Gastrocnemius medialis (tissue), 4 donors: ENCODE measurements at regions of chr5 and their contacts with region 1.

Region 1: GRCh38 chr5:67246108-67246507 is 49.5 kb upstream of the CD180 start:
- DNase-seq: no peak
- ATAC-seq: peak; percentile 72 to 77
- H3K4me3 ChIP-seq: no peak overlapping the region
- H3K27ac ChIP-seq: peak overlapping the region in 3 of 4 donors; percentile 4 to 14 (median 14)
- H3K4me1 ChIP-seq: peaks cover 8 to 12% of the 10 kb centered on the region in 2 donors
- H3K27me3 ChIP-seq: no peaks in the 10 kb centered on the region
- CTCF ChIP-seq: peak; percentile 74 to 83 (median 81)
- POLR2A ChIP-seq: no peak

Region 2: GRCh38 chr5:67287510-67288268 is 41.6 kb after region 1 on chr5:
- in situ Hi-C with region 1: no loop called
- intact Hi-C with region 1: no loop called
- DNase-seq: no peak
- ATAC-seq: no peak
- H3K4me3 ChIP-seq: no peak overlapping the region
- H3K27ac ChIP-seq: no peak overlapping the region
- H3K4me1 ChIP-seq: no peaks in the 10 kb centered on the region
- H3K27me3 ChIP-seq: no peaks in the 10 kb centered on the region
- CTCF ChIP-seq: no peak
- POLR2A ChIP-seq: no peak

Region 3: DNA sequence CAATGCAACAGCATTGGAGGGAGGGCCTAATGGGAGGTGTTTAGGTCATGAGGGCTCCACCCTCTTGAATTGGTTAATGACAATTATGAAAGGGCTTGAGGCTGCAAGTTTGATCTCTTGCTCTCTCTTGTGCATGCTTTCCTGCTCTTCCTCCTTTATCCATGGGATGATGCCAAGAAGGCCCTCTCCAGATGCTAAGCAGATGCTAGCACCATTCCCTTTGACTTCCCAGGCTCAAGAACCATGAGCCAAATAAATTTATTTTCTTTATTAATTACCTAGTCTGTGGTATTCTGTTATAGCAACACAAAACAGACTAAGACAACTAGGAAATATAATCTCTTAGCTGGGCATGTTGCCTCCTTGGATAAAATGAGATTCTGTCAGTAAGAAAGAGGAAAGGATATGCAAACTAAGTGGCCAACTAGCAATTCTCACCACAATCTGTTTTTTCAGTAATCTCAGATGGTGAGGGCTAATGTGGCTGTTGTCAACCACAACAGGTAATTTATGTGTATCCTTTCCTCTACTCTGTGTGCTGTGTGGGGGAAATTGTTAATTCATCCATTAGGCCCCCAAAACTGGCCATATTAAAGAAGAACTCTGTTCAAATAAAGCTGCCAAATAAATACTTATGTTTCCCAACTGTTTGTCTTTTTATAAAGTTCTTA is 219.6 kb after region 1 on chr5:
- in situ Hi-C with region 1: no loop called
- intact Hi-C with region 1: loop called (anchors 10 kb)
- DNase-seq: no peak
- ATAC-seq: no peak
- H3K4me3 ChIP-seq: no peak overlapping the region
- H3K27ac ChIP-seq: peak overlapping the region in 1 of 4 donors; percentile 59
- H3K4me1 ChIP-seq: peaks cover 8 to 17% of the 10 kb centered on the region in 2 donors
- H3K27me3 ChIP-seq: no peaks in the 10 kb centered on the region
- CTCF ChIP-seq: no peak
- POLR2A ChIP-seq: no peak

Region 4: DNA sequence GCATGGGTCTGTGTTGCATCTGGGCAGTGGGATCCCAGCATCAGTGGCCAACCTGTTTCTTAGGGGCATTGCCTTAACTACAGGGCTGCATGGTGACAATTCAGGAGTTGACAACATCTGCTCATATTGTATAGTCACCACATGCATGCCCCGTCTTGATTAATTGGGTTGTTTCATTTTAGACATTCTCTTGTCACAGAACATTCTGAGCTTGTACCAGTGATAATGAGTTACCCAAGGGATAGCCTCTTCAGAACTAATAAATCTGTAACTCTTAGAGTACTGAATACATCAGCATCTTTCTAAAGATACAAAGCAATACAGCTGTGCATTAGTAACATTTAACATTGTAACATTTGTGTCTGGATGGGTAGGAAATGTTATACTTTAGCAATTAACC is 377.0 kb after region 1 on chr5:
- in situ Hi-C with region 1: no loop called
- intact Hi-C with region 1: no loop called
- DNase-seq: no peak
- ATAC-seq: peak in 1 of 2 donors; percentile 67
- H3K4me3 ChIP-seq: no peak overlapping the region
- H3K27ac ChIP-seq: peak overlapping the region in 1 of 4 donors; percentile 54
- H3K4me1 ChIP-seq: peaks cover 30 to 34% of the 10 kb centered on the region in 2 donors
- H3K27me3 ChIP-seq: no peaks in the 10 kb centered on the region
- CTCF ChIP-seq: no peak
- POLR2A ChIP-seq: no peak

Region 5: DNA sequence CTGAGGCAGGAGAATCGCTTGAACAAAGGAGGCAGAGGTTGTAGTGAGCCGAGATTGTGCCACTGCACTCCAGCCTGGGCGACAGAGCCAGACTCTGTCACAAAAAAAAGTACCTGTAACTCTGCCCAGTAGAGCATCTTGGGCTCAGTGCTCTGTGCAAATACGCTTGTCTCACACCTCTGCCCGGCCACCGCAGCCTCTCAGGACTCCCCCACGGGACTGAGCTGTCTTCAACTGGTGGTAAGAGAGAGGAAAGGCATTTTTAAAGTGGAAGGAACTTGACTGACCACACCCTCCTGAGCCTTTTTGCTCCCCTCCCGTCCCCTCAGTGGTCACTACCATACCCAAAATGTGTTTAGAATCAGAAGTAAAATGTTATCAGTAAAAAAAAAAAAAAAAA is 795.2 kb after region 1 on chr5:
- in situ Hi-C with region 1: no loop called
- intact Hi-C with region 1: loop called (anchors 10 kb)
- DNase-seq: no peak
- ATAC-seq: no peak
- H3K4me3 ChIP-seq: no peak overlapping the region
- H3K27ac ChIP-seq: no peak overlapping the region
- H3K4me1 ChIP-seq: no peaks in the 10 kb centered on the region
- H3K27me3 ChIP-seq: no peaks in the 10 kb centered on the region
- CTCF ChIP-seq: no peak
- POLR2A ChIP-seq: no peak

Region 6: DNA sequence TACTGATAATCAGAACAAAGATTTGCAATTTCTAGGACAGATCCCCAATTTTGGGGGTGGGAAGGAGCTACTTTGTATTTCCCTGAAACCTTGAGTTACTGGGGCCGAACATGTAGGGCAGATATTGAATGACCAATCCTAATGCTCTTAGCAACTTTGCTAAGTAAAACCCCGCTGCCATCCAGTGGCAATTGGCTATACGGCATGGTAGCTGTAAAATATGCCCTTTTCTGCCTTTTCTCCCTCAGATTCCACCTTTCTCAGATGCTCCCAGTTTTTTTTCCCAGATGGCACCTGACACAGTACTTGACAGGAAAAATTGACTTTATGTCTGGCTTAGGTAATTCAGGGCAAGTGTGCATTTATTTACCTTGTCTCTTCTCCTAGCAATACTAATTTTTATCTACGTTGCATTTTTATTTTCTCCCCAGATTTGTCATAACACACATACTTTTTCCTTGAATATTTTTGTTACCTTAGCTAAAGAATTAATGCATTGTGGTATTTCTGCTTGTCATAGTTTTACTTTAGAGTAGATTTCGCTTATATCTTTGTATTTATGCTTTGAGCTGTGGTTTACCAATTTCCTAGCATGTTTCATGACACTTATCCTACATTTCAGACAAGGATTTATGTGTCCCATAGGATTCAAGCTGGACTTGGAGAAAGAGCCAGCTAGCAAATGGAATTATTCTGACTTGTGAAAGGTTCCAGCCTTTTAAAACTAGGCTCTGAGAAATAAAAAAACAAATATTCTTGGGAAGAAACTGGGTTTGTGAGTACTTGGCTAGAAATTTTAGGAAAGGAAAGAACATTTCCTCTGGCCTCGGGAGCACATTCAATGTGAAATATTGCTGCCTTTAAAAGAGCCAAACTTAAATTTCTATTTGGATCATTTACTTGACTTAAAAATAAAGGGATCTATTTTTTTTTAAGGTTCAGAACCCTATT is 1006.8 kb after region 1 on chr5:
- in situ Hi-C with region 1: loop called (anchors 10 to 25 kb)
- intact Hi-C with region 1: loop called (anchors 2 kb)
- DNase-seq: peak; percentile 36 to 61
- ATAC-seq: peak; percentile 77 to 83
- H3K4me3 ChIP-seq: peak overlapping the region in 3 of 4 donors; percentile 6 to 28 (median 19)
- H3K27ac ChIP-seq: peak overlapping the region; percentile 67 to 75 (median 74)
- H3K4me1 ChIP-seq: peaks cover 80 to 88% of the 10 kb centered on the region in 2 donors
- H3K27me3 ChIP-seq: no peaks in the 10 kb centered on the region
- CTCF ChIP-seq: peak; percentile 56 to 86 (median 73)
- POLR2A ChIP-seq: no peak

Region 7: DNA sequence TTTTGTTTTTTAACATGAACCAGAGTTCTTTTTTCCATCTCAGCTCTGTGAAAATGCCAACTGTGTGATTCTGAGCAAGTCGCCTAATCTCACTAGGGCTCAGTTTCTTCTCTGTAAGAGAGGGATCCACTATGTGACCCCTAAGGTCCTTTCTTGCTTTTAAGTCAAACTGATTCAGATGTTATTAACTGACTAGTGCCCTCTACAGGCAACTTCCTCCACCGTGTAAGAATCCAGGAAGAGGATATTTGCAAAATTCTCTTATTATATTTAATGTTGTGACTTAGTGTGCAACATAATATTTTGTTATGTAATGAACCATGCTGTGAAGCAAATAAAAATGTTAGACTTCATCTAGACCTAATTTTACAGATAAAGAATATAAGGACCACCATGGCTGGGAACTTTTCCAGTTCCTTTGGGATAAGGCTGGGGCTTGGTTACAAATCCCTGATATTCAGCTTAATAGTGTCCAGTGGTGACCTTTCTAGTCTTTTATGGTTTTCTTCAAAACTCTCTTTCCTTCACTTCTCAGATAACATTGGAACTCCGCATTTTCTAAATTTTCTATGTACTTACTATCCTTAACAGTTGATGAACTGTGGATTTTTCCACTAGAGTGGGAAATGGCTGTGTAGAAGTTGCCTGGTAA is 1214.2 kb after region 1 on chr5:
- in situ Hi-C with region 1: loop called (anchors 10 to 25 kb)
- intact Hi-C with region 1: loop called (anchors 10 kb)
- DNase-seq: no peak
- ATAC-seq: peak in 1 of 2 donors; percentile 63
- H3K4me3 ChIP-seq: no peak overlapping the region
- H3K27ac ChIP-seq: no peak overlapping the region
- H3K4me1 ChIP-seq: peaks cover 0 to 16% of the 10 kb centered on the region in 2 donors
- H3K27me3 ChIP-seq: no peaks in the 10 kb centered on the region
- CTCF ChIP-seq: peak; percentile 52 to 71 (median 62)
- POLR2A ChIP-seq: no peak

Region 8: GRCh38 chr5:68688547-68688946 is 1442.4 kb after region 1 on chr5:
- in situ Hi-C with region 1: no loop called
- intact Hi-C with region 1: no loop called
- DNase-seq: no peak
- ATAC-seq: no peak
- H3K4me3 ChIP-seq: no peak overlapping the region
- H3K27ac ChIP-seq: no peak overlapping the region
- H3K4me1 ChIP-seq: no peaks in the 10 kb centered on the region
- H3K27me3 ChIP-seq: no peaks in the 10 kb centered on the region
- CTCF ChIP-seq: no peak
- POLR2A ChIP-seq: no peak